ENCODE measurements at regions of chr7 and their contacts with region 1.

Region 1: DNA sequence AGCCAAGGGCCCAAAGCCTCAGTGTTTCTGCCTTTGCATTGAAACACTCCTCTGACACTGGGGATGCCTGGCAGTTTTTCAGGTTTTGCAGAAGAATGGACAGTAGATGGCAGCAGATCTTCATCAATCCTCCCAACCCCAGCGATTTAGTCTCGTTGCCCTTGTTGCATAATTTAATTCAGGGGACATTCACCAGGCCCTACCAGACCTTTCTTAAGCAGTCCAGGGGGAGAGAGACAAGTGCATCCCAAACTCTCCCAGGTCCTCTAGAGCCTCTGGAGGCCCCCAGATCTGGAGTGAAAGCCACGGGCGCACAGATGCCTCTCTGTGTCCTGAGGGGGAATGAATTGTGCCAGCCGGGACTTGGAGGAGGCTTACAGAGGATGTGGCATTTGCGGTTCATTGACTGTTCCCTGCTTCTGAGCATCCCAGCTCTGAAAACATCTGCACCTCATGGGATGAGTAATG is 29.6 kb downstream of the MINDY4 start:
- DNase-seq: peak; percentile 73
- H3K4me3 ChIP-seq: no peak overlapping the region
- H3K27ac ChIP-seq: no peak overlapping the region
- H3K4me1 ChIP-seq: peaks cover 47% of the 10 kb centered on the region
- CTCF ChIP-seq: peak; percentile 86

Region 2: DNA sequence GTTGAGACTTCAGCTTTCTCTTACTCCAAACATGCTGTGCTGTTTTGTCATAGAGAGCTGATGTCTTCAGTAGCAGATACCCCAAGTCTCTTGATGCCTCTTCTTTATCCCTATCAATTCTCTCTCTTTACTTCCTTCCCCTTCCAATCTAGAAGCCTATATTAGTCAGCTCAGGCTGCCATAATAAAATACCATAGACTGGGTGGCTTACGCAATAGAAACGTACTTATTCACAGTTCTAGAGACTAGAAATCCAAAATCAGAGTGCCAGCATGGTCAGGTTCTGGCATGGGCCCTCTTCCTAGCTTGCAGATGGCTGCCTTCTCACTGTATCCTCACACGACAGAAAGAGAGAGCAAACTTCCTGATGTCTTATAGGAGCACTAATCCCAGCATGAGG is 215.1 kb before region 1 on chr7:
- CTCF ChIA-PET with region 1: no interaction called
- POLR2A ChIA-PET with region 1: no interaction called
- intact Hi-C with region 1: no loop called
- DNase-seq: no peak
- H3K4me3 ChIP-seq: no peak overlapping the region
- H3K27ac ChIP-seq: no peak overlapping the region
- H3K4me1 ChIP-seq: no peaks in the 10 kb centered on the region
- CTCF ChIP-seq: no peak

Region 3: GRCh38 chr7:30908681-30909080 is 107.9 kb after region 1 on chr7:
- CTCF ChIA-PET with region 1: no interaction called
- POLR2A ChIA-PET with region 1: no interaction called
- intact Hi-C with region 1: loop called (anchors 1 kb)
- DNase-seq: no peak
- H3K4me3 ChIP-seq: no peak overlapping the region
- H3K27ac ChIP-seq: no peak overlapping the region
- H3K4me1 ChIP-seq: no peaks in the 10 kb centered on the region
- CTCF ChIP-seq: no peak

Region 4: DNA sequence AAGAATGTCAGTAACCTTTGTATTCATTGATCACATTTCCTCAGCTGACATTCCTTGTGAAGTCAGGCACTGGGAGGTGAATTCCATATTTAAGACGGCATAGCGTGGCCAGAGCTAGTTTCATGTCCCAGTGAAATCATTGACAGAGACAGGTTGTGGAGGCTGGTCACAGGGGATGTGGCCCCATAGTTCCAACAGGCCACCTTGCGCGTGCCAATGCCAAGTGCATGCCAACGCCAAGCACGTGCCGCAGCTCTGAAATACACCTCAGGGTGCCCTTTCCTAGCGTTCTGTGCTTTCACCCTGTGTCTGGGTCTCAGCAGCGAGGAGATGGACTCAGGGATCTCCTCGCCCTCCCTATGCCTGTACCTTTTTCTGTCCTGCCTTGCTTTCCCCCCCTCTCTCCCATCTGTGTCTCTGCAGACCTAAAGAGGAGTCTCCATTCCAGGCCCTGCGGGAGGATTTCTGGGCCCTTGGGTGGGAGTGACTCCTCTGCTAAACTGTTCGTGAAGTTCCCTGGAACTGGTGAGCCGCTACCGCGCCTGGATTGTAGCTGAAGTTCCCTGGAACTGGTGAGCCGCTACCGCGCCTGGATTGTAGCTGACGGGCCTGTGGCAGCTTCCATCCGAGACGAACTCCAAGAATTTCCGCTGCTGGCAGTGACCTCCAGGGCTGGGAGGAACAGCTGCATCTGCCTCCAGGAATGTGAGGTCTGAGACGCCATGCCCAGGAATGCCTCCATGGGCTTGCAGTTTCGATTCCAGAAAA is 130.5 kb after region 1 on chr7:
- CTCF ChIA-PET with region 1: no interaction called
- POLR2A ChIA-PET with region 1: no interaction called
- intact Hi-C with region 1: no loop called
- DNase-seq: no peak
- H3K4me3 ChIP-seq: no peak overlapping the region
- H3K27ac ChIP-seq: no peak overlapping the region
- H3K4me1 ChIP-seq: no peaks in the 10 kb centered on the region
- CTCF ChIP-seq: no peak

Region 5: GRCh38 chr7:30974605-30975255 is 173.9 kb after region 1 on chr7:
- CTCF ChIA-PET with region 1: no interaction called
- POLR2A ChIA-PET with region 1: interaction called, 3 read pairs
- intact Hi-C with region 1: loop called (anchors 1 kb)
- DNase-seq: peak; percentile 79
- H3K4me3 ChIP-seq: no peak overlapping the region
- H3K27ac ChIP-seq: peak overlapping the region; percentile 29
- H3K4me1 ChIP-seq: peaks cover 46% of the 10 kb centered on the region
- CTCF ChIP-seq: peak; percentile 82

Region 6: GRCh38 chr7:31122649-31123058 is 321.8 kb after region 1 on chr7:
- CTCF ChIA-PET with region 1: interaction called, 4 read pairs
- POLR2A ChIA-PET with region 1: no interaction called
- intact Hi-C with region 1: loop called (anchors 1 kb)
- DNase-seq: peak; percentile 63
- H3K4me3 ChIP-seq: no peak overlapping the region
- H3K27ac ChIP-seq: no peak overlapping the region
- H3K4me1 ChIP-seq: no peaks in the 10 kb centered on the region
- CTCF ChIP-seq: peak; percentile 87

Region 7: GRCh38 chr7:31613604-31614003 is 812.8 kb after region 1 on chr7:
- CTCF ChIA-PET with region 1: no interaction called
- POLR2A ChIA-PET with region 1: no interaction called
- intact Hi-C with region 1: no loop called
- DNase-seq: no peak
- H3K4me3 ChIP-seq: no peak overlapping the region
- H3K27ac ChIP-seq: no peak overlapping the region
- H3K4me1 ChIP-seq: no peaks in the 10 kb centered on the region
- CTCF ChIP-seq: no peak